Right ventricle myocardium inferior (tissue), 1 donor: ENCODE measurements at regions of chr13 and their contacts with region 1.

Region 1: DNA sequence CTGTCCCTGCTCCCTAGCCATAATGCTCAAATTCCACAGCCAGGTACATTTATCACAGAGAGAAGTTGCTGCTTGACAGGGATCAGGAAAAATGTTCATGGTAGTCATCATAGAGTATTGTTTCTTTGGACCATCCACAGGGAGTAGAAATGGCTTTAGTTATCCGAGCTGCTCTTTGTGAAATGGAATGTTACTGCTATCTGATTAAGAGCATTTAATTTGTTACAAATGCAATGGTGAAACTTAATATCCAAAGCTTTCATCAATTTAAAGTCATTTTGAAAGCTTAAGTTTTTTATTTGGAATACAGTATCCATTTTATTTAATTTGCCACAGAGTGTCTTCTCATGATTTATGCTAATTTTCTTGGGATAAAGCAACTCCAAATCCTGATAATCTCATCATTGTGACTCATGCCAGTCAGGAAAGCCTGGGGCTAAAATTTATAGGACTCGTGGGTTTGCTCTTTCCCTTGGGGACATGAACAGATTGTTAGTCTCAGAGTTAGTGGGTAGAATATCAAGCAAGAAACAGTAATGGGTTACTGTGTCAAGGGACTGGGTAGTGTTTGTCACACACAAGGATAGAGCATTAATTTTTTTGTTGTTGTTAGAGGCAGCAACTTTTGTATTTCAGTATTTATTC is 59.8 kb downstream of the SCEL start:
- DNase-seq: no peak
- ATAC-seq: no peak

Region 2: DNA sequence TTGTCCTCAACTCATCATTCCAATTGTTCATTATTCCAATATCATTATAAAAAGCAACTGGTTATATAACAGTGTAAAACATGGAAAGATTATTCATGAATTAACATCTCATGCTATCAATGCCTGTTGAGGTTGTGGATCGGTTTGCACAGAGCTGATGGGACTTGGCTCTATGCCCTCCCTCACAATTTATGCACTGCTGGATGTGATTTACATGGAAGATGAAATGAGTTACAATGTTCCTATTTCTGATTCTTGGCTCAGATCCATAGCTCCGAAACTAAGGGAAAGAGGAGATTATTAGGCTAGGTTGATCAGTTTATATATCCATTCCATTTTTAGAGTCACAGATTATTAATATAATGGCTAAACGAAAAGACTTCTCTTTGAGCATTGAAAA is 21.2 kb before region 1 on chr13:
- intact Hi-C with region 1: no loop called
- DNase-seq: no peak
- ATAC-seq: no peak

Region 3: GRCh38 chr13:77749344-77749880 is 154.1 kb after region 1 on chr13:
- intact Hi-C with region 1: loop called (anchors 2 kb)
- DNase-seq: no peak
- ATAC-seq: no peak